Endothelial cell of umbilical vein (primary cell): ENCODE measurements at regions of chr13 and their contacts with region 1.

Region 1: GRCh38 chr13:21176220-21176982 is at the starts of genes MRPL57 and SKA3:
- DNase-seq: peak; percentile 96
- H3K4me3 ChIP-seq: peak within 1 kb of the TSS; percentile 81 to 96 (median 89)
- H3K27ac ChIP-seq: peak within 1 kb of the TSS; percentile 76
- H3K4me1 ChIP-seq: peaks cover 12% of the 10 kb centered on the region
- H3K27me3 ChIP-seq: no peaks in the 10 kb centered on the region
- CTCF ChIP-seq: peak in 1 of 2 donors; percentile 7
- POLR2A ChIP-seq: peak; percentile 85
- total RNA-seq, gene MRPL57: 19.5 and 23.1 TPM in 2 replicates
- total RNA-seq, gene SKA3: 25.9 and 28.7 TPM in 2 replicates

Region 2: DNA sequence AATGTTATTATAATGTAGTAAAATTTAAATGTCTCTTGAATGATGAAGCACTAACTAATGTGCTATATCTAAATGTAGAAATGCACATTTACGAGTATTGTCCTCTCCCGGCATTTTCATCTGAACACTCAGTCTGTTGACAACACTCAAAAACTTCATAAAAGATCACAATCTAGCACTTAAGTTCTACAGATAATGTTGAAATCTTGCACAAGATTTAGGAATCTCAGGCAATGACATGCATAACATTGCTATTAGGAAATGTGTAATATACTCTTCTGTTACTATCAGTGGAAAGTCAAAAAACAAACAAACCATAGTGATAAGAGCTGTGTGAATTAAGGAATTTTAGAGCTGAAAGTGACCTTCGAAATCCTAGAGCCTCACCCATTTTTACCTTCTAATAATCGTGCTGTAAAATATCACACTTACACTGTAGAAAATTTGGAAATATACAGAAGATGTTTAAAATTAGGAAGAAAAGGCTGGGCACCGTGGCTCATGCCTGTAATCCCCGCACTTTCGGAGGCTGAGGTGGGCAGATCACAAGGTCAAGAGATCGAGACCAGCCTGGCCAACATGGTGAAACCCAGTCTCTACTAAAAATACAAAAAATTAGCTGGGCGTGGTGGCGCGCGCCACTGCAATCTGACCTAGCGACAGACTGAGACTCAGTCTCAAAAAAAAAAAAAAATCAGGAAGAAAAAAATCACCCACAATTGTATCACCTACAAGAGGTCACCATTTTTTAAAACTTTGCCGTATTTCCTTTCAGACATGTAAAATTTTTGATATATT is 236.1 kb before region 1 on chr13:
- CTCF ChIA-PET with region 1: interaction called, 81 read pairs
- POLR2A ChIA-PET with region 1: interaction called, 13 read pairs
- dilution Hi-C with region 1: no loop called
- intact Hi-C with region 1: loop called (anchors 1 kb)
- DNase-seq: no peak
- H3K4me3 ChIP-seq: no peak overlapping the region
- H3K27ac ChIP-seq: no peak overlapping the region
- H3K4me1 ChIP-seq: no peaks in the 10 kb centered on the region
- H3K27me3 ChIP-seq: no peaks in the 10 kb centered on the region
- CTCF ChIP-seq: no peak
- POLR2A ChIP-seq: no peak

Region 3: GRCh38 chr13:20945952-20946383 is 230.4 kb before region 1 on chr13:
- CTCF ChIA-PET with region 1: interaction called, 81 read pairs
- POLR2A ChIA-PET with region 1: interaction called, 13 read pairs
- dilution Hi-C with region 1: no loop called
- intact Hi-C with region 1: loop called (anchors 1 kb)
- DNase-seq: peak; percentile 21
- H3K4me3 ChIP-seq: peak overlapping the region in 2 of 3 experiments; percentile 5 to 22
- H3K27ac ChIP-seq: no peak overlapping the region
- H3K4me1 ChIP-seq: peaks cover 8% of the 10 kb centered on the region
- H3K27me3 ChIP-seq: peaks cover 0 to 6% of the 10 kb centered on the region in 2 experiments
- CTCF ChIP-seq: no peak
- POLR2A ChIP-seq: no peak

Region 4: DNA sequence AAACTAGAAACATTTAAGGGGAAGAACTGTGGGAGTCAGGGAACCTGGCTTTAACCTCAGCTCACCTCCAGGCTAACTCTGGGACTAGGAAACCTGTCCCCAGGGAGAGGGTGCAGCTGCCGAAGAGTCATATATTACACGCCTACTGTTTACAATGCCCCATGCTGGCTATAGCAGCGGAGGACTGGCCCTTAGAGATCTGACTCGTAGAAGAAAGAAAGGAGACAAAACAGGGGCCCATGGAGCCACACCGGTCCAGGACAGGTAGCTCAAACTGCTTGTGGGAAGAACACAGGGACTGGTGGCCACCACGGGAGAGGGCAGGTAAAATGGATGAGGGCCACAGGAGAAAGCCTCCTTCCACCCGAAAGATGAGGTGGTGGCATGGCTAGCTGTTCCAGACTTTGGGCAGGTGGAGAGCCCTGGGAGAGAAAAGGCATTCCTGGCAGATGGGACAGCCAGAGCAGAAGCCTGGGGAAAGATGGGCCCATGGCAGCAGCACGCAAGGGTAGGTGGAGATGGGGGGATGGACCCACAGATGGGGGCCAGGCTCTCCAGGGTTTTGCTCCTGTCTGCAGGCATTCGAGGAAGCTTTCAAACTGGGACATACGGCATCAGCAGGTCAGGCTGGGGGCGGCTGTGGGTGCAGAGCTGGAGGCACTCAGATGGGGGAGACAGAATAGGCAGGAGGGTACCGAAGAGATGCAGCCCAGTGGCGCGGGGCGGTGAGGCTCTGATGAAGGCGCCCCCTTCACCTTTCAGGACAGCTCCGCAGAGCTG is 184.5 kb before region 1 on chr13:
- CTCF ChIA-PET with region 1: no interaction called
- POLR2A ChIA-PET with region 1: interaction called, 11 read pairs
- dilution Hi-C with region 1: no loop called
- intact Hi-C with region 1: no loop called
- DNase-seq: no peak
- H3K4me3 ChIP-seq: no peak overlapping the region
- H3K27ac ChIP-seq: no peak overlapping the region
- H3K4me1 ChIP-seq: no peaks in the 10 kb centered on the region
- H3K27me3 ChIP-seq: no peaks in the 10 kb centered on the region
- CTCF ChIP-seq: no peak
- POLR2A ChIP-seq: no peak

Region 5: GRCh38 chr13:21006141-21007005 is 170.0 kb before region 1 on chr13:
- CTCF ChIA-PET with region 1: no interaction called
- POLR2A ChIA-PET with region 1: no interaction called
- dilution Hi-C with region 1: no loop called
- intact Hi-C with region 1: no loop called
- DNase-seq: no peak
- H3K4me3 ChIP-seq: no peak overlapping the region
- H3K27ac ChIP-seq: no peak overlapping the region
- H3K4me1 ChIP-seq: no peaks in the 10 kb centered on the region
- H3K27me3 ChIP-seq: no peaks in the 10 kb centered on the region
- CTCF ChIP-seq: no peak
- POLR2A ChIP-seq: no peak

Region 6: DNA sequence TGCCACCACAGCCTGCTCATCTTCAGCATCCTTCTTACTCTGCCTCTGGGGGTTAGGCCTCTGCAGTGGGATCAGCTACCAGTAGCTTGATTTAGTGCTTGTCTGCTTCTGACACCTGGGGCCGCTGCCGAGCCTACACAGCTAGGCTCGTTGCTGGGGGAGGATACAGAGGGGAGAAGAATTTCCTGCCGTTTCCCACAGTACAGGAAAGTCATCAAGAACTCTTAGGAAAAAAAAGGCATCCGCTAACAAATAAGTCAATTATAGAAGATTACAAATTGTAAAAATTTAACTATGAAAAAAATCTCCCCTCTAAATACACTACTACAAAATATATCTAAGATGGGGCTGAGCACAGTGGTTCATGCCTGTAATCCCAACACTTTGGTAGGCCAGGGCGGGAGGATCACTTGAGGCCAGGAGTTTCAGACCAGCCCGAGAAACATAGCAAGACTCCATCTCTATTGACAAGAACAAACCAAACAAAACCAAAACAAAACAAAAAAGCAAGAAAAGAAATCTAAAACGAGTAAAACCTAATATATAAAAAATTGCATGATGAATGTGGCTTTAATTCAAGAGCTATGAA is 141.7 kb before region 1 on chr13:
- CTCF ChIA-PET with region 1: interaction called, 12 read pairs
- POLR2A ChIA-PET with region 1: no interaction called
- dilution Hi-C with region 1: no loop called
- intact Hi-C with region 1: loop called (anchors 2 kb)
- DNase-seq: peak; percentile 71
- H3K4me3 ChIP-seq: no peak overlapping the region
- H3K27ac ChIP-seq: peak overlapping the region; percentile 12
- H3K4me1 ChIP-seq: peaks cover 66% of the 10 kb centered on the region
- H3K27me3 ChIP-seq: no peaks in the 10 kb centered on the region
- CTCF ChIP-seq: peak; percentile 23 to 54
- POLR2A ChIP-seq: no peak

Region 7: GRCh38 chr13:21075011-21075898 is 101.1 kb before region 1 on chr13:
- CTCF ChIA-PET with region 1: interaction called, 4 read pairs
- POLR2A ChIA-PET with region 1: no interaction called
- dilution Hi-C with region 1: no loop called
- intact Hi-C with region 1: loop called (anchors 1 kb)
- DNase-seq: peak; percentile 59
- H3K4me3 ChIP-seq: peak overlapping the region in 2 of 3 experiments; percentile 51 to 52
- H3K27ac ChIP-seq: peak overlapping the region; percentile 95
- H3K4me1 ChIP-seq: peaks cover 31% of the 10 kb centered on the region
- H3K27me3 ChIP-seq: no peaks in the 10 kb centered on the region
- CTCF ChIP-seq: no peak
- POLR2A ChIP-seq: peak; percentile 76

Region 8: GRCh38 chr13:21297914-21298831 is 121.8 kb after region 1 on chr13:
- CTCF ChIA-PET with region 1: interaction called, 3 read pairs
- POLR2A ChIA-PET with region 1: no interaction called
- dilution Hi-C with region 1: no loop called
- intact Hi-C with region 1: loop called (anchors 5 kb)
- DNase-seq: peak; percentile 90
- H3K4me3 ChIP-seq: peak overlapping the region; percentile 54 to 81 (median 70)
- H3K27ac ChIP-seq: no peak overlapping the region
- H3K4me1 ChIP-seq: peaks cover 12% of the 10 kb centered on the region
- H3K27me3 ChIP-seq: no peaks in the 10 kb centered on the region
- CTCF ChIP-seq: peak; percentile 89 to 90
- POLR2A ChIP-seq: peak; percentile 16